ENCODE measurements at regions of chr12 and their contacts with region 1.

Region 1: GRCh38 chr12:54005853-54006686 is 2.7 kb upstream of the HOXC8 start:
- DNase-seq: peak; percentile 93 to 95
- H3K4me3 ChIP-seq: peak overlapping the region; percentile 16 to 44 (median 36)
- H3K27ac ChIP-seq: no peak overlapping the region
- H3K4me1 ChIP-seq: peaks cover 15 to 26% (median 22%) of the 10 kb centered on the region in 4 donors
- H3K27me3 ChIP-seq: peaks cover 42 to 100% (median 99%) of the 10 kb centered on the region in 3 donors
- CTCF ChIP-seq: peak in 5 of 7 experiments; percentile 85 to 96 (median 92)
- EP300 ChIP-seq: no peak
- POLR2A ChIP-seq: no peak

Region 2: GRCh38 chr12:53830621-53831020 is 175.4 kb before region 1 on chr12:
- intact Hi-C with region 1: no loop called
- DNase-seq: no peak
- H3K4me3 ChIP-seq: no peak overlapping the region
- H3K27ac ChIP-seq: no peak overlapping the region
- H3K4me1 ChIP-seq: no peaks in the 10 kb centered on the region
- H3K27me3 ChIP-seq: peaks cover 0 to 44% (median 7%) of the 10 kb centered on the region in 3 donors
- CTCF ChIP-seq: no peak
- EP300 ChIP-seq: no peak
- POLR2A ChIP-seq: no peak

Region 3: GRCh38 chr12:53952871-53953734 is 53.0 kb before region 1 on chr12:
- intact Hi-C with region 1: no loop called
- DNase-seq: no peak
- H3K4me3 ChIP-seq: no peak overlapping the region
- H3K27ac ChIP-seq: no peak overlapping the region
- H3K4me1 ChIP-seq: peaks cover 8 to 51% (median 18%) of the 10 kb centered on the region in 4 donors
- H3K27me3 ChIP-seq: peaks cover 81 to 100% (median 100%) of the 10 kb centered on the region in 3 donors
- CTCF ChIP-seq: no peak
- EP300 ChIP-seq: no peak
- POLR2A ChIP-seq: no peak

Region 4: GRCh38 chr12:54082397-54082892 is 76.4 kb after region 1 on chr12:
- intact Hi-C with region 1: no loop called
- DNase-seq: peak; percentile 74 to 91
- H3K4me3 ChIP-seq: peak overlapping the region; percentile 27 to 42 (median 40)
- H3K27ac ChIP-seq: peak overlapping the region; percentile 86 to 97 (median 90)
- H3K4me1 ChIP-seq: peaks cover 0 to 24% (median 11%) of the 10 kb centered on the region in 4 donors
- H3K27me3 ChIP-seq: no peaks in the 10 kb centered on the region
- CTCF ChIP-seq: no peak
- EP300 ChIP-seq: no peak
- POLR2A ChIP-seq: no peak

Region 5: GRCh38 chr12:54207484-54208294 is 201.6 kb after region 1 on chr12:
- intact Hi-C with region 1: loop called (anchors 5 kb)
- DNase-seq: peak; percentile 85 to 89
- H3K4me3 ChIP-seq: no peak overlapping the region
- H3K27ac ChIP-seq: no peak overlapping the region
- H3K4me1 ChIP-seq: no peaks in the 10 kb centered on the region
- H3K27me3 ChIP-seq: peaks cover 4 to 95% (median 23%) of the 10 kb centered on the region in 3 donors
- CTCF ChIP-seq: peak in 5 of 7 experiments; percentile 71 to 94 (median 91)
- EP300 ChIP-seq: no peak
- POLR2A ChIP-seq: no peak

Region 6: DNA sequence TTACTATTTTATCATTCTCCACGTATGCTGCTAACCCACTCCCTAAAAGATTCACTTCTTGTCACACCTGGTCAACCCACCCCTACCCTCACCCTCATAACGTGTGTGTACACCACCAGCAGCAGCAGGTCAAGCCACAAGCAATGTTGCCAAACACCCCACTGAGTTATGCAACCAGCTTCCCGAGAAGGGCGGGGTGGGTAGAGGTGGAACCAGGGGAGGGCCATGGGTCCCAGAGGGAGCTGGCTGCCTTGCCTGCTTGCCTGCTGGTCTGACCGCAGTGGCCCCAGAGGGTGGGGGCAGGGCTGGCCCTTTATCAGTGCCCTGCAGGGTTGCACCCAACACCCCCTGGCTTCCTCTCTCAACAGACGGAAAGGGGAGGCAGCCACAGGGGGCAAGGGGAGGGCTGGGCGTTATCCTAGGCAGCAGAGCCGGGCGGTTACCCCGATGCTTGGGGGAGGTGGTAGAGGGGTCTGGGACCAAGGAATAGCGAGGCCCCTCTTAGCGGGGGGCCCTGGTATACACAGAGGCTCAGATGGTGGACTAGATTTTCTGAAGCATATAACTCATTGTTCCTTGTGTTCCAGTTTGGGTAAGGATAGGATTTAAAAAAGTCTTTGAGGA is 298.2 kb after region 1 on chr12:
- intact Hi-C with region 1: no loop called
- DNase-seq: peak; percentile 88 to 93
- H3K4me3 ChIP-seq: no peak overlapping the region
- H3K27ac ChIP-seq: peak overlapping the region in 3 of 5 donors; percentile 36 to 76 (median 75)
- H3K4me1 ChIP-seq: peaks cover 13 to 48% (median 32%) of the 10 kb centered on the region in 4 donors
- H3K27me3 ChIP-seq: peaks cover 0 to 40% (median 7%) of the 10 kb centered on the region in 3 donors
- CTCF ChIP-seq: no peak
- EP300 ChIP-seq: no peak
- POLR2A ChIP-seq: no peak

Measured in stomach (tissue), 19 donors.